CD4-positive, alpha-beta T cell (primary cell): ENCODE measurements at regions of chr11 and their contacts with region 1.

Region 1: DNA sequence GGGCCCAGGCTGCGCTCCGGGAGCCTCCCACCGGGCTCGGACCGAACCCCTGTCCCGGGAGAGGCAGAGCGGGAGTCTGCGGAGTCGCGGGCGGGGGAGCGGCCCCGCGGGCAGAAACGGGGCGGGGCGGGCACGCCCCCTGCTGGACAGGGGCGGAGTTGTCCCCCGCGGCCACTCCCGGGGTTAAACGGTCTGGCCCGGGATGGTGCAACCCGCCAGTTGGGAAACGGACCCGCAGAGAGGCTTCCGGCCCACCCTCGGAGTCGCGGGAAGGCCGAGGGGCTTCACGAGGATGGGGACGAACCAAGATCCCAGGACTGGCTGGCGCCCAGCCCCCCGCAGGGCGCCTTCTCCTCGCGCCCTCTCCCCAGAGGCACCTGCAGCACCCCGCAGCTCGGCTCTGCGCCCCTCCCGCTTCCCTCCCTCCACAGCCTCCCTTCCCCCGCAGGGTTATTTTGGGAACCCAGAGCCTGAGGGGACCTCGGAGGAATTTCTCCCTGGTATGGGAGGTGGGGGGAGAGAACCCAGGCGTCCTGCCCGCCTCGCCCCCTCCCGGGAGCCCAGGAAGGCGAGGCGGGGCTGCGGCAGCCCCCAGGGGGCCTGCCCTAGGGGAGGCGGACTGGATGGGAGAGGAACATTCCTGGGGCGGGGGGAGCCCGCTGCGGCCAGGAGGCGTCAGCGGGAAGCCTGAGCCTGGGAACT is 902 bp downstream of the RASGRP2 start:
- DNase-seq: peak; percentile 58 to 87 (median 72)
- ATAC-seq: peak; percentile 13
- H3K4me3 ChIP-seq: peak overlapping the region; percentile 98
- H3K4me3 Mint-ChIP-seq: peak overlapping the region; percentile 85
- H3K27ac ChIP-seq: peak overlapping the region; percentile 89 to 95
- H3K27ac Mint-ChIP-seq: peak overlapping the region; percentile 92
- H3K4me1 ChIP-seq: peaks cover 67% of the 10 kb centered on the region
- H3K4me1 Mint-ChIP-seq: peaks cover 46% of the 10 kb centered on the region
- H3K27me3 ChIP-seq: no peaks in the 10 kb centered on the region
- H3K27me3 Mint-ChIP-seq: no peaks in the 10 kb centered on the region
- CTCF ChIP-seq: peak; percentile 80

Region 2: DNA sequence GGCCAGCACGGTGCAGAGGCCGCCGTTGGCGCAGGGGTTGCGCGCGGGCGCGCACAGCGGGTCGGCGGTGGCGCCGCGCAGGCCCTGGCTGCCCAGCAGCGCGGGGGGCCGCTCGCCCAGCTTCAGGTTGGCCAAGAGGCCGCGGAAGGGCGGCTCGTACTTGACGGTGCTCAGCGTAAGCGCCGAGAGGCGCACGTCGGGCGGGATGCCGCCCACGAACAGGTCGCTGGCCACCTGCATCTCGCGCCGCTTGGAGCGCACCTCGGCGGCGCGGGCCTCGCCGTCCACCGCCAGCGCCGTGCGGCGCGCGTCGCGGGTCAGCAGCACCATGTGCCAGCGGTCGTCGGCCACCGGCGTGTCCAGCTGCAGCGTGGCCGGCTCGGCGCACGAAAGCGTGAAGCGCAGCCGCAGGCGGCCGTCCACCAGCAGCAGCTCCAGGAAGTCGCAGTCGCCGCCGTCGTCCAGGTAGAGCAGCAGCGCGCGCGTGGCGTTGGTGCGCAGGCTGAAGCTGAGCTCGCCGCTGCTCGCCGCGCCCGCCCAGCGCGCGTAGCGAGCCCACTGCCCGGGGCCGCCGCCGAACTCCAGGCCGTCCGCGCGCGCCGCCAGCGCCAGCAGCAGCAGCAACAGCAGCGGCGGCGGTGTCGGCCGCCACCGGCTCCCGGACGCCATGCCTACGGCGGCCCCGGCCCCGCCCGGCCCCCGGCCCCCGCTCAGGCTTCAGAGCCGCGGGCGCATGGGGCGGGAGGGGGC is 29.8 kb before region 1 on chr11:
- CTCF ChIA-PET with region 1: no interaction called
- POLR2A ChIA-PET with region 1: no interaction called
- intact Hi-C with region 1: no loop called
- DNase-seq: peak in 4 of 14 experiments; percentile 13 to 57 (median 42)
- ATAC-seq: peak; percentile 35
- H3K4me3 ChIP-seq: no peak overlapping the region
- H3K4me3 Mint-ChIP-seq: no peak overlapping the region
- H3K27ac ChIP-seq: no peak overlapping the region
- H3K27ac Mint-ChIP-seq: no peak overlapping the region
- H3K4me1 ChIP-seq: peaks cover 11% of the 10 kb centered on the region
- H3K4me1 Mint-ChIP-seq: peaks cover 14% of the 10 kb centered on the region
- H3K27me3 ChIP-seq: peaks cover 62 to 78% of the 10 kb centered on the region in 2 experiments
- H3K27me3 Mint-ChIP-seq: peaks cover 85% of the 10 kb centered on the region
- CTCF ChIP-seq: no peak

Region 3: DNA sequence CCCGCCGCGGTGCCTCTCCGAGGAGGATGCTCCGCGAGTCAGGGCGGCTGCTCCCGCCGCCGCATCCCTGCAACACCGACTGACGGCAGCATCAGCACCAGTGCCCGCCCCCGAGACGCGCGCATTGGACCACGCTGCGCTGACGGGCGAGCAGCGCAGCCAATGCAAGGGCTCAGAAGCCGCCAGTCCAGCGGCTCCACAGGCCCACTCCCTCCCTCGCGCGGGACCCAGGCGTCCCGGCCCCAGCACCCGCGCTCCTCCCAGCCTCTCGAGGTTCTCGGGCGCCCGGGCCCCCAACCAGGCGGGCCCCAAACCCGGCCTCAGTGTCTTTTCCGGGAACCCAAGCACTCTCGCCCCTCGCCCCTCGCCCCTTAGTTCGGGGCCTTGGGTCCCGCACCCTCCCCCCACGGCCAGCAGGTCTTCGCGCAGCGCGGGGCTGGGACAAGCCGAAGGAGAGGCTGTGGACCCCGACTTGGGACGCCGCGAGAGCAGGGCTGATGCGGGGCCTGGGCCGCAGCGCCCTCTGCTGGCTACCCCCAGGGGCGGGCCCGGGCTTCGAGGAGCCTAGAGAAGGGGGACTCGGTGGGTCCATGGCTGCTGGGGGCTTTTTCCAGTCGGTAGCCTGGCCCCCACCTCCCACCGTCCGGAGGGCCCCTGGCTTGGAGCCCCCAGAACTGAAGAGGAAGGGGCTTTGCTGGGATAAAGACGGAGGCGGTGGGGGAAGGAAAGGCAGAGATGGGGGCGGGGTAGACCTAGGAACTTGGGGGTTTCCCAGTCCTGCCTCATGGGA is 19.7 kb before region 1 on chr11 and contains the start of gene NRXN2:
- CTCF ChIA-PET with region 1: interaction called, 6 read pairs
- POLR2A ChIA-PET with region 1: interaction called, 12 read pairs
- intact Hi-C with region 1: no loop called
- DNase-seq: peak; percentile 74 to 95 (median 82)
- ATAC-seq: peak; percentile 95
- H3K4me3 ChIP-seq: peak within 1 kb of the TSS; percentile 66
- H3K4me3 Mint-ChIP-seq: peak within 1 kb of the TSS; percentile 63
- H3K27ac ChIP-seq: peak within 1 kb of the TSS; percentile 48 to 61
- H3K27ac Mint-ChIP-seq: peak within 1 kb of the TSS; percentile 61
- H3K4me1 ChIP-seq: peaks cover 15% of the 10 kb centered on the region
- H3K4me1 Mint-ChIP-seq: peaks cover 16% of the 10 kb centered on the region
- H3K27me3 ChIP-seq: peaks cover 14 to 21% of the 10 kb centered on the region in 2 experiments
- H3K27me3 Mint-ChIP-seq: peaks cover 36% of the 10 kb centered on the region
- CTCF ChIP-seq: peak; percentile 98
- total RNA-seq, gene NRXN2: 0.05 to 0.31 TPM

Region 4: GRCh38 chr11:64787526-64788320 is 44.7 kb after region 1 on chr11:
- CTCF ChIA-PET with region 1: no interaction called
- POLR2A ChIA-PET with region 1: interaction called, 13 read pairs
- intact Hi-C with region 1: no loop called
- DNase-seq: peak; percentile 44 to 78 (median 58)
- ATAC-seq: peak; percentile 88
- H3K4me3 ChIP-seq: no peak overlapping the region
- H3K4me3 Mint-ChIP-seq: no peak overlapping the region
- H3K27ac ChIP-seq: no peak overlapping the region
- H3K27ac Mint-ChIP-seq: peak overlapping the region; percentile 69
- H3K4me1 ChIP-seq: peaks cover 13% of the 10 kb centered on the region
- H3K4me1 Mint-ChIP-seq: peaks cover 12% of the 10 kb centered on the region
- H3K27me3 ChIP-seq: no peaks in the 10 kb centered on the region
- H3K27me3 Mint-ChIP-seq: no peaks in the 10 kb centered on the region
- CTCF ChIP-seq: peak; percentile 82

Region 5: DNA sequence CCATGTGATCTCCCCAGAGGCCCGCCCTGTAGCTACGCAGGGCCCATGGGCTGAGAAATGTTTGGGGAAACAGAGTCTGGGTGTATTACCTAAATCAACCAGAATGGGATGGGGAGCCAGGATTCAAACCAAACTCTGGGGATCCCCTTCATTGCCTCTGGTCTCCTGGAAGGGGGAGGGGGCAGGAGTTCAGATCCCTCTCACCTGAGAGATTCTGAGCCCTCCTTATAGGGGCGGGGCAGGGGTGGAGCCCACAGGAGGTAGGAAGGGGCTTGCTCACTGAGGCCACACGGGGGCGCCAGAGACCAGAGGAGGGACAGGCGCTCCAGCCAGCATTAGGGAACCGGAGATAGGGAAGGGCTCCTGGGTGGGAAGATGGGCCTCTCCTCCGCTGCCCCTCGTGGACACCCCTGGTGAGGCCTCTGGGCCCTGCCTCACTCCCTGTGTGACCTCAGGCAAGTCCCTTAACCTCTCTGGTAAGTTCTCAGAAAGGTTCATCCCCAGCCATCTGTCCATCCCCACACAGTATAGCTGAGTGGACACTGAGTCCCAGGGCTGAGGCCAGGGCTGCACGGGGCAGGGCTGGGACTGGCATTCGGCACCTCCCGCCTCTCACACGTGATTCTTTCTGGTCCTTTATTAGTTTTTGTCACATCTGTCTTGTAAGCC is 104.1 kb after region 1 on chr11:
- CTCF ChIA-PET with region 1: interaction called, 3 read pairs
- POLR2A ChIA-PET with region 1: interaction called, 15 read pairs
- intact Hi-C with region 1: loop called in 1 of 2 experiments (anchors 2 kb)
- DNase-seq: peak; percentile 87 to 98 (median 92)
- ATAC-seq: peak; percentile 62
- H3K4me3 ChIP-seq: no peak overlapping the region
- H3K4me3 Mint-ChIP-seq: peak overlapping the region; percentile 76
- H3K27ac ChIP-seq: no peak overlapping the region
- H3K27ac Mint-ChIP-seq: peak overlapping the region; percentile 85
- H3K4me1 ChIP-seq: peaks cover 77% of the 10 kb centered on the region
- H3K4me1 Mint-ChIP-seq: peaks cover 64% of the 10 kb centered on the region
- H3K27me3 ChIP-seq: no peaks in the 10 kb centered on the region
- H3K27me3 Mint-ChIP-seq: no peaks in the 10 kb centered on the region
- CTCF ChIP-seq: peak; percentile 97

Region 6: DNA sequence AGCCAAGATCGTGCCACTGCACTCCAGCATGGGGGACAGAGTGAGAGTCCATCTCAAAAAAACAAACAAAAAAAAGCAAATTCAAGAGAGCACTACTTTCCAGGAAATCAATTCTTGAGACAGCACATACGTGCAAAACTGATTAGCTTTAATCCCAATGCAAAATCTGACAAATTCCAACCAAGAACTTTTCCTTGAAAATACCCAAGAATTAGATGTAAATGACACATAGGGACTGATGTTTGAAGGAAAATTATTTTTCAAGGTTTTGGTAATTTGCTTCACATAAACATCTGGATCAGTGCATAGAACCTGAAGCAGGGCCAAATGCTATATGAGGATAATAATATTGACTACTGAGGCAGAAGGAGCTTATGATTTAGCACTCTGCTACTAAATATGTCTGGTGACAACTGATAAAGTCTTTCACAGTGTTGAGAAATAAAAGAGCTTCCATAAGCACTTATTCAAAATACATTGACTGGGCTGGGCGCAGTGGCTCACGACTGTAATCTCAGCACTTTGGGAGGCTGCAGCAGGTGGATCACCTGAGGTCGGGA is 220.1 kb after region 1 on chr11:
- CTCF ChIA-PET with region 1: no interaction called
- POLR2A ChIA-PET with region 1: no interaction called
- intact Hi-C with region 1: no loop called
- DNase-seq: no peak
- ATAC-seq: no peak
- H3K4me3 ChIP-seq: no peak overlapping the region
- H3K4me3 Mint-ChIP-seq: no peak overlapping the region
- H3K27ac ChIP-seq: no peak overlapping the region
- H3K27ac Mint-ChIP-seq: no peak overlapping the region
- H3K4me1 ChIP-seq: no peaks in the 10 kb centered on the region
- H3K4me1 Mint-ChIP-seq: no peaks in the 10 kb centered on the region
- H3K27me3 ChIP-seq: peaks cover 0 to 8% of the 10 kb centered on the region in 2 experiments
- H3K27me3 Mint-ChIP-seq: peaks cover 8% of the 10 kb centered on the region
- CTCF ChIP-seq: no peak

Region 7: DNA sequence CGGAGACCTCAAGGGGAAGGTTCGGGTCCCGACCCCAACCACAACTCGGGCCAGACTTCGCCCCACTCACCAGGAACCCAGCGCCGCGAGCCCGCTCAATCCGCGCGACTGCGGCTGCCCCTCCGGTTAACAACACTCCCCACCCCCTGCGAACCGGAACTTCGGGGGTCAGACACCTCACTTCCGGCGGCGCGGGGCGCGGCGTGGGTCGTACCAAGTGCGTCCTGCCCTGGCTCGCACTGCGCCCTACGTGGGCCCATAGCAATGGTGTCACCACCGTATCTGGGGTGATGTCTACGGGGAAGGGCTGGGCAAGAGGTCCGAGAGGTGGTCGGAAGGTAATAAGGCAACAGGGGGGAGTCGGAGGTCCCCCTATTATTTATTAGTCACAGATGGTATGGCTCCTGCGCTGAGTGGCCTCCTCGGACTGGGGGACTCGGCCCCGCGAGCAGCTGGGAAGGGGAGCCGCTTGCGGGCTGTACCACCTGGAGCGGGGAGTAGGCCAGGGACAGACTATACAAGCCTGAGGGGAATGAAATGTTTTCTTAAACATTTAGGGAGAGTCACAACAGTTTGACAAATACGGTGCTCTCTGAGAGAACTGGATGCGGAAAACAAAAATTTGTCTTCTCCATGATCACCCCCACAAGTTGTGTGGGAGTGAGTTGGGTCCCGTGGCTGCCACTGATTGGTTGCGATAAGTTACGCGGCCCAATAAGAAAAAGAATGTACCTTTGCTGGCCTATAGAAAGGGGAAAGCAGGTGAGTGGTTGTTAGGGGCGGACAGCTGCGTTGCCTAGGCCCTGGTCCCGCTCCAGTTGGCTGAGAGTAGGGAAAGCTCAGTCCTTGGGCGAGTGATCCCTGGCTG is 391.6 kb after region 1 on chr11 and contains the start of gene SYVN1:
- CTCF ChIA-PET with region 1: no interaction called
- POLR2A ChIA-PET with region 1: interaction called, 10 read pairs
- intact Hi-C with region 1: no loop called
- DNase-seq: peak; percentile 86 to 96 (median 90)
- ATAC-seq: peak; percentile 88
- H3K4me3 ChIP-seq: peak within 1 kb of the TSS; percentile 83
- H3K4me3 Mint-ChIP-seq: peak within 1 kb of the TSS; percentile 99
- H3K27ac ChIP-seq: peak within 1 kb of the TSS; percentile 96 to 99
- H3K27ac Mint-ChIP-seq: peak within 1 kb of the TSS; percentile 100
- H3K4me1 ChIP-seq: peaks cover 47% of the 10 kb centered on the region
- H3K4me1 Mint-ChIP-seq: peaks cover 45% of the 10 kb centered on the region
- H3K27me3 ChIP-seq: no peaks in the 10 kb centered on the region
- H3K27me3 Mint-ChIP-seq: no peaks in the 10 kb centered on the region
- CTCF ChIP-seq: no peak
- total RNA-seq, gene SYVN1: 89.1 to 96.8 TPM